CD4-positive, alpha-beta memory T cell (primary cell): ENCODE measurements at regions of chr11 and their contacts with region 1.

Region 1: DNA sequence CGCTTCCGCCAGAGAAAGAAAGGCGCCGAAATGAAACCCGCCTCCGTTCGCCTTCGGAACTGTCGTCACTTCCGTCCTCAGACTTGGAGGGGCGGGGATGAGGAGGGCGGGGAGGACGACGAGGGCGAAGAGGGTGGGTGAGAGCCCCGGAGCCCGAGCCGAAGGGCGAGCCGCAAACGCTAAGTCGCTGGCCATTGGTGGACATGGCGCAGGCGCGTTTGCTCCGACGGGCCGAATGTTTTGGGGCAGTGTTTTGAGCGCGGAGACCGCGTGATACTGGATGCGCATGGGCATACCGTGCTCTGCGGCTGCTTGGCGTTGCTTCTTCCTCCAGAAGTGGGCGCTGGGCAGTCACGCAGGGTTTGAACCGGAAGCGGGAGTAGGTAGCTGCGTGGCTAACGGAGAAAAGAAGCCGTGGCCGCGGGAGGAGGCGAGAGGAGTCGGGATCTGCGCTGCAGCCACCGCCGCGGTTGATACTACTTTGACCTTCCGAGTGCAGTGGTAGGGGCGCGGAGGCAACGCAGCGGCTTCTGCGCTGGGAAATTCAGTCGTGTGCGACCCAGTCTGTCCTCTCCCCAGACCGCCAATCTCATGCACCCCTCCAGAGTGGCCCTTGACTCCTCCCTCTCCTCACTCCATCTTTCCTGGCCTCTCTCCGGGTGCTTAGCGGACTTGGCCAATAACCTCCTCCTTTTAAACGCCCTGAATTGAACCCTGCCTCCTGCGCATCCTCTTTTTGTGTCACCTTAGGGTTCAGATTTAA is at the start of gene ATM:
- DNase-seq: peak; percentile 98 to 99 (median 99)
- H3K4me3 ChIP-seq: peak within 1 kb of the TSS; percentile 97 to 99
- H3K4me3 Mint-ChIP-seq: no peak within 1 kb of the TSS
- H3K27ac ChIP-seq: peak within 1 kb of the TSS; percentile 97
- H3K27ac Mint-ChIP-seq: no peak within 1 kb of the TSS
- H3K4me1 ChIP-seq: peaks cover 57% of the 10 kb centered on the region
- H3K4me1 Mint-ChIP-seq: peaks cover 33 to 57% (median 47%) of the 10 kb centered on the region in 4 donors
- H3K27me3 ChIP-seq: no peaks in the 10 kb centered on the region
- H3K27me3 Mint-ChIP-seq: no peaks in the 10 kb centered on the region
- total RNA-seq, gene ATM: 525 to 555 TPM

Region 2: GRCh38 chr11:107785401-107785800 is 437.5 kb before region 1 on chr11:
- CTCF ChIA-PET with region 1: no interaction called
- POLR2A ChIA-PET with region 1: no interaction called
- intact Hi-C with region 1: no loop called
- DNase-seq: no peak
- H3K4me3 ChIP-seq: no peak overlapping the region
- H3K4me3 Mint-ChIP-seq: no peak overlapping the region
- H3K27ac ChIP-seq: no peak overlapping the region
- H3K27ac Mint-ChIP-seq: peak overlapping the region in 1 of 7 donors; percentile 44
- H3K4me1 ChIP-seq: no peaks in the 10 kb centered on the region
- H3K4me1 Mint-ChIP-seq: no peaks in the 10 kb centered on the region
- H3K27me3 ChIP-seq: no peaks in the 10 kb centered on the region
- H3K27me3 Mint-ChIP-seq: peaks cover 0 to 2% of the 10 kb centered on the region in 2 donors

Region 3: DNA sequence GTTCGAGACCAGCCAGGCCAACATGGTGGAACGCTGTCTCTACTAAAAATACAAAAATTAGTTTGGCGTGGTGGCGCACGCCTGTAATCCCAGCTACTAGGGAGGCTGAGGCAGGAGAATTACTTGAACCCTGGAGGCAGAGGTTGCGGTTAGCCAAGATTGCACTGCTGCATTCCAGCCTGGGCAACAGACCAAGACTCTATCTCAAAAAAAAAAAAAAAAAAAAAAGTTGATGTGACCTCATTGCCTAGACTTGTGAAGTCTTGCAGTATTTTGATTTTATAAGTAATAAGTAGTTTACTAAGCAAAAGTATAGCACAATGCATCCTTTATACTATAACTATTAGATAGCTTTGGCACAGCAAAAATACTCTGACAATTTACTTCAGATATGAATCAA is 224.1 kb before region 1 on chr11:
- CTCF ChIA-PET with region 1: no interaction called
- POLR2A ChIA-PET with region 1: no interaction called
- intact Hi-C with region 1: no loop called
- DNase-seq: no peak
- H3K4me3 ChIP-seq: no peak overlapping the region
- H3K4me3 Mint-ChIP-seq: no peak overlapping the region
- H3K27ac ChIP-seq: no peak overlapping the region
- H3K27ac Mint-ChIP-seq: no peak overlapping the region
- H3K4me1 ChIP-seq: no peaks in the 10 kb centered on the region
- H3K4me1 Mint-ChIP-seq: peaks cover 0 to 2% (median 0%) of the 10 kb centered on the region in 4 donors
- H3K27me3 ChIP-seq: no peaks in the 10 kb centered on the region
- H3K27me3 Mint-ChIP-seq: peaks cover 6 to 13% of the 10 kb centered on the region in 2 donors

Region 4: GRCh38 chr11:108121274-108122155 is 101.4 kb before region 1 on chr11 and contains the start of gene ACAT1:
- CTCF ChIA-PET with region 1: no interaction called
- POLR2A ChIA-PET with region 1: interaction called, 6 read pairs
- intact Hi-C with region 1: loop called (anchors 2 kb)
- DNase-seq: peak; percentile 93 to 95 (median 93)
- H3K4me3 ChIP-seq: peak within 1 kb of the TSS; percentile 85 to 91
- H3K4me3 Mint-ChIP-seq: peak within 1 kb of the TSS; percentile 82 to 96 (median 93)
- H3K27ac ChIP-seq: peak within 1 kb of the TSS; percentile 71
- H3K27ac Mint-ChIP-seq: peak within 1 kb of the TSS; percentile 61 to 96 (median 89)
- H3K4me1 ChIP-seq: peaks cover 41% of the 10 kb centered on the region
- H3K4me1 Mint-ChIP-seq: peaks cover 36 to 55% (median 38%) of the 10 kb centered on the region in 4 donors
- H3K27me3 ChIP-seq: no peaks in the 10 kb centered on the region
- H3K27me3 Mint-ChIP-seq: no peaks in the 10 kb centered on the region
- total RNA-seq, gene ACAT1: 19.3 to 19.5 TPM

Region 5: DNA sequence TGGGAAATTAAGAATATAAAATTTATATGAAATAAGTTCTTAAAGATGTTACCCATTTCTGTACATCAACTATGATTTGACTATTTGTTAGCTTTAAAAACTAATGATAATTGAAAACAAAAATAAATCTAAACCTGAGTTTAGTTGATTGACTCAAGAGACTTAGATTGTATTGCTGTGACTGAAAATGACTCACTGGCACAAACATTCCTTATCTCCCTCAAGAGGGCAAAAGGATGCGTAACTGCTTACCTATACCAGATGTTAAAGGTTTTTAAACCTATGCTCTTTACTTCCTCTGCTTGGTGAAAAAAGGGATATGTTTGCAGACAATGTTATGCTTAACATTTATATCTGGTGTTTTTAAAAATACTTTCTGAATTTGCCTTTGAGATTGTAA is 30.3 kb after region 1 on chr11:
- CTCF ChIA-PET with region 1: interaction called, 6 read pairs
- POLR2A ChIA-PET with region 1: interaction called, 55 read pairs
- intact Hi-C with region 1: loop called (anchors 2 kb)
- DNase-seq: no peak
- H3K4me3 ChIP-seq: no peak overlapping the region
- H3K4me3 Mint-ChIP-seq: no peak overlapping the region
- H3K27ac ChIP-seq: no peak overlapping the region
- H3K27ac Mint-ChIP-seq: peak overlapping the region in 1 of 7 donors; percentile 72
- H3K4me1 ChIP-seq: peaks cover 22% of the 10 kb centered on the region
- H3K4me1 Mint-ChIP-seq: peaks cover 18 to 33% (median 23%) of the 10 kb centered on the region in 4 donors
- H3K27me3 ChIP-seq: no peaks in the 10 kb centered on the region
- H3K27me3 Mint-ChIP-seq: no peaks in the 10 kb centered on the region

Region 6: DNA sequence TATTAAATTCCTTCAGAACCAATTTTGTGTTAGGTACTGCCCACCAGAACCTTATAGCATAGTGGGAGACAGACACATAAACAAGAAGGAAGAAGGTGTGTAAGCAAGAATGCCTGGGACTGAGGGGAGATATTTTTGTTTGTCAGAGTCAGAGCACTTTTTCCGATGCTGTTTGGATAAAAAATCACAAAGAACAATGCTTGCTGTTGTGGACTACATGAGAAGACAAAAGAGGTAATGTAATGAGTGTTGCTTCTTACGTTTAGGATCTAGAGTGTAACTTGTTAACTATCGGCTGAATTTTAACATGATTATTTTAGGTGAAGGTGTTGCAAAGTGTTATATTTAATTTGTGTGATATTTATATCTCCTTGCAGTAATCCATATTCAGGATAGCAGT is 84.9 kb after region 1 on chr11:
- CTCF ChIA-PET with region 1: no interaction called
- POLR2A ChIA-PET with region 1: interaction called, 10 read pairs
- intact Hi-C with region 1: no loop called
- DNase-seq: no peak
- H3K4me3 ChIP-seq: no peak overlapping the region
- H3K4me3 Mint-ChIP-seq: no peak overlapping the region
- H3K27ac ChIP-seq: no peak overlapping the region
- H3K27ac Mint-ChIP-seq: peak overlapping the region in 3 of 7 donors; percentile 6 to 71 (median 30)
- H3K4me1 ChIP-seq: peaks cover 5% of the 10 kb centered on the region
- H3K4me1 Mint-ChIP-seq: peaks cover 10 to 24% (median 16%) of the 10 kb centered on the region in 4 donors
- H3K27me3 ChIP-seq: no peaks in the 10 kb centered on the region
- H3K27me3 Mint-ChIP-seq: no peaks in the 10 kb centered on the region

Region 7: GRCh38 chr11:108593214-108593922 is 370.5 kb after region 1 on chr11 and contains the start of gene EXPH5:
- CTCF ChIA-PET with region 1: no interaction called
- POLR2A ChIA-PET with region 1: no interaction called
- intact Hi-C with region 1: loop called (anchors 1 kb)
- DNase-seq: peak; percentile 82 to 89 (median 86)
- H3K4me3 ChIP-seq: peak within 1 kb of the TSS; percentile 83 to 89
- H3K4me3 Mint-ChIP-seq: peak within 1 kb of the TSS; percentile 95 to 100 (median 97)
- H3K27ac ChIP-seq: peak within 1 kb of the TSS; percentile 45
- H3K27ac Mint-ChIP-seq: peak within 1 kb of the TSS; percentile 78 to 99 (median 95)
- H3K4me1 ChIP-seq: peaks cover 9% of the 10 kb centered on the region
- H3K4me1 Mint-ChIP-seq: peaks cover 17 to 23% (median 18%) of the 10 kb centered on the region in 4 donors
- H3K27me3 ChIP-seq: peaks cover 6% of the 10 kb centered on the region
- H3K27me3 Mint-ChIP-seq: peaks cover 2 to 3% of the 10 kb centered on the region in 2 donors
- total RNA-seq, gene EXPH5: 2.6 to 4.0 TPM